ENCODE measurements at regions of chr9 and their contacts with region 1.

Region 1: DNA sequence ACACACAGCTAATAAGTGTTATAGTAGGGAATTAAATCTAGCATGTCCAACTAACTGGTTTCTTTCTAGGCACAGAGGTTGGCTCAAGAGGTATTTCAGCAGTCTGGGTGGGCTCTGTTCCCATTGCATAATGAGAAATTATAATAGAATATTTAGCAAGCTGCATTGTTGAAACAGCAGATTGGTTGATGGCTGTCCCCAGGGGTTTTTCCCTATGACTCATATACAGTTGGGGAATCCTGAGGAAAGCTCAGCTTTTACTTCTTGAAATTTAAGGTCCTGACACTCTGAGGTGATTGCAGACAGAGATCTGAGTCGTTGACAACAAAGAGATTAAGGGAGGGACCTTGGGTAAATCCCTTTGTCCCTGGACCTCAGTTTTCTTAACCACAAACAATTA is 38.3 kb upstream of the TNFSF8 start:
- DNase-seq: no peak
- ATAC-seq: peak; percentile 90
- H3K4me3 Mint-ChIP-seq: no peak overlapping the region
- H3K27ac Mint-ChIP-seq: no peak overlapping the region
- H3K4me1 Mint-ChIP-seq: peaks cover 28% of the 10 kb centered on the region
- H3K27me3 Mint-ChIP-seq: no peaks in the 10 kb centered on the region

Region 2: GRCh38 chr9:114958021-114958843 is 10.4 kb before region 1 on chr9:
- CTCF ChIA-PET with region 1: interaction called, 17 read pairs
- POLR2A ChIA-PET with region 1: no interaction called
- intact Hi-C with region 1: no loop called
- DNase-seq: peak; percentile 68
- ATAC-seq: peak; percentile 83
- H3K4me3 Mint-ChIP-seq: peak overlapping the region; percentile 68
- H3K27ac Mint-ChIP-seq: peak overlapping the region; percentile 96
- H3K4me1 Mint-ChIP-seq: peaks cover 56% of the 10 kb centered on the region
- H3K27me3 Mint-ChIP-seq: no peaks in the 10 kb centered on the region

Region 3: DNA sequence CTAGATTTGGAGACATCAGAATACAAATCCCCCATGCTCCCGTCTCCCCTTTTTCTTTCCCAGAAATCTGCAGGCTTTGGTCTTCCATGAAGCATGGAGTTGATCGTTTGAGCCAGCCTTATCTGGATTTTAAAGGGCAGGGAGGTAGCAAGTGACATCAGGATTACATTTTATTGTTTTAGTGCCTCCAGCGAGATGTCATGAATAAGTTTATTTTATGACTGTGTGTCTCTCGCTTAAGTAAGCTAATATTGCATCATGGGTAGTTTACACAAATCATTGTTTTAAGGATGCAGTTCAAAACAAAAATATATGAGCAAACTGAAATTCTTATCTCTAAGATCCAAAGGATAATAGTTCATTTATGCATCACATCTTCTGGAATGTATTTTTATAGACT is 12.4 kb after region 1 on chr9:
- CTCF ChIA-PET with region 1: interaction called, 12 read pairs
- POLR2A ChIA-PET with region 1: interaction called, 4 read pairs
- intact Hi-C with region 1: no loop called
- DNase-seq: no peak
- ATAC-seq: no peak
- H3K4me3 Mint-ChIP-seq: no peak overlapping the region
- H3K27ac Mint-ChIP-seq: no peak overlapping the region
- H3K4me1 Mint-ChIP-seq: no peaks in the 10 kb centered on the region
- H3K27me3 Mint-ChIP-seq: no peaks in the 10 kb centered on the region